ENCODE measurements at regions of chr19 and their contacts with region 1.

Region 1: DNA sequence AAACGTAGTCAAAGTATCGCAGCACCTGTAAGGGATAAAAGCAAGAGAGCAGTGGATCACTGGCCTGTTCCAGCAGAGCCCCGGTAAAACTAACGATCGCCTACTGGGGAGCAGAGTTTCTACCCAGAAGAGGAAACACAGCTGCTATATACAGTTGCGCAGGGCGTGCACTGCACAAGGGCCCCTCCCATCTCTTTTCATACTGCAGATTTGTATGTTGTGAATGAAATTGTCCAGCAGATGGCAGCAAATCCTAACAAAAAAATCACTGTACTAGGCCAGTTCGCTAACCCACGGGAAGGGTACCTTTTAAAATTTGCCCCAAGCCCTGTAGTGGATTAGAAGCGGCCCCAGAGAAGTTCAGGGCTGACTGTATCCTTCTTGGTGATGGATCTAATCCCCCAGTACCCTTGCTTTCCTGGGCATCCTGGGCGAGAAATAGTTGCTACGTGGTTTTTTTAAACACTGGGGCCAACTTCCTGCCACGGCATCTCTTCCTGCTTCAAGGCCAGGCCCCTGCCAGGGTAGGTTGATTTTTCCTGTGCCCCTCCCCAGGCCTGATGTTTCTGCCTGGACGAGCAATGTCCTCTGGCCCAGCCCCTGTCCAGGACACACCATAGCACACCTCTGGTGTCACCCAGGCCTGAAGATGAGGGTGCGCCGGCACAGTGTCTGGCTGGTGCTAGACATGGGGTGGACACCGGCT is 127.0 kb downstream of the IER2 start:
- DNase-seq: peak; percentile 93
- H3K4me3 Mint-ChIP-seq: peak overlapping the region; percentile 32
- H3K27ac Mint-ChIP-seq: peak overlapping the region; percentile 79
- H3K4me1 Mint-ChIP-seq: peaks cover 7% of the 10 kb centered on the region
- H3K27me3 Mint-ChIP-seq: peaks cover 8% of the 10 kb centered on the region

Region 2: GRCh38 chr19:13430790-13431582 is 153.7 kb after region 1 on chr19:
- intact Hi-C with region 1: loop called (anchors 1 kb)
- DNase-seq: peak; percentile 86
- H3K4me3 Mint-ChIP-seq: no peak overlapping the region
- H3K27ac Mint-ChIP-seq: no peak overlapping the region
- H3K4me1 Mint-ChIP-seq: no peaks in the 10 kb centered on the region
- H3K27me3 Mint-ChIP-seq: peaks cover 3% of the 10 kb centered on the region

Region 3: GRCh38 chr19:13588957-13589833 is 311.9 kb after region 1 on chr19:
- intact Hi-C with region 1: loop called (anchors 1 kb)
- DNase-seq: peak; percentile 95
- H3K4me3 Mint-ChIP-seq: no peak overlapping the region
- H3K27ac Mint-ChIP-seq: no peak overlapping the region
- H3K4me1 Mint-ChIP-seq: no peaks in the 10 kb centered on the region
- H3K27me3 Mint-ChIP-seq: peaks cover 2% of the 10 kb centered on the region

Region 4: GRCh38 chr19:13731147-13731964 is 454.1 kb after region 1 on chr19:
- intact Hi-C with region 1: loop called (anchors 10 kb)
- DNase-seq: peak; percentile 99
- H3K4me3 Mint-ChIP-seq: peak overlapping the region; percentile 89
- H3K27ac Mint-ChIP-seq: peak overlapping the region; percentile 95
- H3K4me1 Mint-ChIP-seq: peaks cover 19% of the 10 kb centered on the region
- H3K27me3 Mint-ChIP-seq: no peaks in the 10 kb centered on the region

Measured in activated CD4-positive, alpha-beta T cell treated with anti-CD3 and anti-CD28 coated beads, Interleukin-2, amount 10 ng/mL, durations not matched to agents 24 days and 14 days (primary cell).